ENCODE measurements at regions of chr1 and their contacts with region 1.

Region 1: GRCh38 chr1:219900201-219900600 is 28.2 kb downstream of the SLC30A10 start:
- DNase-seq: no peak
- H3K4me3 Mint-ChIP-seq: no peak overlapping the region
- H3K27ac Mint-ChIP-seq: no peak overlapping the region
- H3K4me1 Mint-ChIP-seq: no peaks in the 10 kb centered on the region
- H3K27me3 Mint-ChIP-seq: peaks cover 5% of the 10 kb centered on the region

Region 2: GRCh38 chr1:219724440-219724839 is 175.8 kb before region 1 on chr1:
- CTCF ChIA-PET with region 1: no interaction called
- intact Hi-C with region 1: no loop called
- DNase-seq: no peak
- H3K4me3 Mint-ChIP-seq: no peak overlapping the region
- H3K27ac Mint-ChIP-seq: no peak overlapping the region
- H3K4me1 Mint-ChIP-seq: no peaks in the 10 kb centered on the region
- H3K27me3 Mint-ChIP-seq: no peaks in the 10 kb centered on the region

Region 3: DNA sequence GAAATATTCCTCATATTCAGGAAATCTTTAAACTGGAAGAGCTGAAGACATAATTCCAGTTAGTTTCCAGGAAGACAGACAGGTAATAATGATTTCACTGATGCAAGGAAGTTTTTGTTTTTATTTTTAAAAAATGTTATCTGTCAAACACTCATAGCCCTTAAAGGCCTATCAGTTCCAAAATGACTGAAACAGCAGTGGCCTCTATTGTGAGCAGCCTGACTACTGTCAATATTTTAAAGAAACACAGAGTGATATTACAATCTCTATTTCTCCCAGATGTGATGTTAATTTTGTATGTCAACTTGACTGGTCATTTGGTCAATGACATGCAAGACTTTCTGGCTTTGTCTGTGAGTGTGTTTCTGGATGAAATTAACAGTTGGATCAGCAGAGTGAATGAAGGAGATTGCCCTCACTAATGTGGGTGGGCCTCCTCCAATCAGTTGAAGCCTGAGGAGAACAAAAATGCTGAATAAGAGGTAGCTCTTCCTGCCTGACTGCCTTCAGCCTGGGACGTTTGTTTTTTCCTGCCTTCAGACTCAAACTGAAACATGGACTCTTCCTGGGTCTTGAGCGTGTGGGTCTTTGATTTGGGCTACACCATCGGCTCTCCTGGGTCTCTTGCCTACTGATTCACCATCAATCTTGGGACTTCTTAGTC is 59.5 kb after region 1 on chr1:
- CTCF ChIA-PET with region 1: no interaction called
- intact Hi-C with region 1: no loop called
- DNase-seq: no peak
- H3K4me3 Mint-ChIP-seq: no peak overlapping the region
- H3K27ac Mint-ChIP-seq: no peak overlapping the region
- H3K4me1 Mint-ChIP-seq: no peaks in the 10 kb centered on the region
- H3K27me3 Mint-ChIP-seq: no peaks in the 10 kb centered on the region

Region 4: DNA sequence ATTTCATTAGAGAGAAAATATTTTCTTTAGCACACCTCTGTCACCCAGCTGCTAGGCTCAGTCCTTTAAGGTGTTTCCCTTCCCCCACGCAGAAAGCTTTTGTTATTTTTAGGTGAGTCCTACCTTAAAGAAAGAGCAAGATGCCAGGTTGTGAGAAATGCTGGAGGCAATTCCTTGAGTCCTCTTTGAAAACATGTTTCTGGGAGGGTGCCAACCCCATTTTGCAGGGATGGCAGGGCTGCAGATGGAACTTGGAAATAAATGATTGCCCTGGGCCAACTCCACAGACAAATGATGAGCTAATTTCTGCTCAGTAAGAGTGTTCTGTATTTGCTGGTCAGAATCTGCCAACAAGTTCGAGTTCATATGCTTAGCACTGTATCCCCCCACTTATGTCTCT is 491.3 kb after region 1 on chr1:
- CTCF ChIA-PET with region 1: no interaction called
- intact Hi-C with region 1: loop called (anchors 5 kb)
- DNase-seq: no peak
- H3K4me3 Mint-ChIP-seq: no peak overlapping the region
- H3K27ac Mint-ChIP-seq: no peak overlapping the region
- H3K4me1 Mint-ChIP-seq: no peaks in the 10 kb centered on the region
- H3K27me3 Mint-ChIP-seq: peaks cover 17% of the 10 kb centered on the region